Left ventricle myocardium inferior (tissue), 1 donor: ENCODE measurements at regions of chr1 and their contacts with region 1.

Region 1: DNA sequence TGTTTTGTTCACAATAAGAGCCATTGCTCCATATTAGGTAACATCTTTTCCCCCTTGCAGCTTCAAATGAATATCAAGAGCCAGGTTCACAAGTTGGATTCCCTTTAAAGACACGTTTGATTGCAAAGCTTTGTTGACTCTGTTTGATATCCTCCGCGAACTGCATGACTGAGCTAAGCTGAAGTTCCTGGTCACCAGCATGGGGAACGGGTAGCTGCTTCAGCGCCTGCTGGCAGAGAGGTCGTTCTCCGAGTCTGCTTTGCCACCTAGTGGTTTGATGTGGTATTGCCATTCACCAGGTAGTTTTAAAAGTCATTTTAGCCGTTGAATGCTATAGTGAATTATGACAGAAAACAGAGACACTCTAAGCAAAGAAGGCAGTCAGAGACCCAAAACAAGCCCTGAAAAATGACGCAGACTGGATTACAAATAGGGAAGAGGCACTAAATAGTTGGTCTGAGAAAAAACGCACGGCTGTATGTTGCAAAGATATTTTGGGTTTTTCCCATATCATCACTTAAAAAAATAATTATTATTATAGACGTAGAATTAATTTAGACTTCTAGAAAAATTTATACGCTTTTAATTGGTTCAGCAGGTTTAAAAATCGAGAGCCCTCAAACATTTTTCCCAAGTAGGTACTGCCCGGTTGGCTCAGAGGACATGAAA is 193.5 kb upstream of the FMN2 start:
- DNase-seq: peak; percentile 50
- H3K4me3 ChIP-seq: peak overlapping the region; percentile 23
- H3K27ac ChIP-seq: no peak overlapping the region
- H3K4me1 ChIP-seq: peaks cover 4% of the 10 kb centered on the region
- H3K27me3 ChIP-seq: peaks cover 41% of the 10 kb centered on the region
- CTCF ChIP-seq: peak; percentile 96

Region 2: GRCh38 chr1:238252033-238252802 is 1646.0 kb before region 1 on chr1:
- intact Hi-C with region 1: loop called (anchors 5 kb)
- DNase-seq: peak; percentile 41
- H3K4me3 ChIP-seq: no peak overlapping the region
- H3K27ac ChIP-seq: no peak overlapping the region
- H3K4me1 ChIP-seq: no peaks in the 10 kb centered on the region
- H3K27me3 ChIP-seq: no peaks in the 10 kb centered on the region
- CTCF ChIP-seq: peak; percentile 46

Region 3: DNA sequence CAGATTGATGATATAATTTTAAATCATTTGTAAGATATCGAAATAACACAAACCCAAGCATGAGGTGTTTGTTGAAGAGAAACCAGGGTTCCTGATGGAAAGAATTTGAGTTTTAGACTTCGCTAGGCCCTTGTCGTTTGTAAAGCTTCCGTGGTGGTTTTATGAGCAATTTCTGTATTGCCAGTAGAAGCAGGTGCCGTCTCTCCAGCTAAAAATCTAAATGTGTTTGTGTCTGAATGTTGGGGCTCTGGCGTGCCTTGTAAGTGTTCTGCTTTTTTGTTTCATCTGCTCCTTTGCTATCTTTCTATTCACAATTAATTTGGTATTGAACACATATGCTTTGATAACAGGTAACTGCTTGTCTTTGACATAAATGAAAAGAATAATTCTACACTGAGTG is 484.3 kb before region 1 on chr1:
- intact Hi-C with region 1: loop called (anchors 5 kb)
- DNase-seq: no peak
- H3K4me3 ChIP-seq: no peak overlapping the region
- H3K27ac ChIP-seq: no peak overlapping the region
- H3K4me1 ChIP-seq: no peaks in the 10 kb centered on the region
- H3K27me3 ChIP-seq: no peaks in the 10 kb centered on the region
- CTCF ChIP-seq: no peak

Region 4: DNA sequence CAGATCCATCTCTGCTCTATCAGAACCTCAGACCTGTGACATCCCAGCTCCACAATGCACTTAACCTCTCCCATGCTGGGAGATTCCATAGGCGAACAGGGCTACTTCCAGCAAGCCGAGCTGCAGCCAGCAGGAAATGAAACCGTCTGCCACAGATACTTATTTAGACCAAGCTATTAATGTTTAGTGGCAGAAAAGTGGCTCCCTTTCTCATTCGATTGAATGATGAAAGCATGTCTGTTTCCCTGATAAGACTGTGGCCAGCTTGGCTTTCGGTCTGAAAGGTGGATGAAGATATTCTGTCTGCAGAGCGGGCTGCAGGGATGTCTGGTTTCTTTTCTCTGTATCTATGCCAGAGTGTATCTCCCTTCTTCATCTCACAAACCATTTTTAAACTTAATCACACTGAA is 567.3 kb after region 1 on chr1:
- intact Hi-C with region 1: no loop called
- DNase-seq: no peak
- H3K4me3 ChIP-seq: no peak overlapping the region
- H3K27ac ChIP-seq: no peak overlapping the region
- H3K4me1 ChIP-seq: no peaks in the 10 kb centered on the region
- H3K27me3 ChIP-seq: peaks cover 12% of the 10 kb centered on the region
- CTCF ChIP-seq: no peak